ENCODE measurements at regions of chr19 and their contacts with region 1.

Region 1: DNA sequence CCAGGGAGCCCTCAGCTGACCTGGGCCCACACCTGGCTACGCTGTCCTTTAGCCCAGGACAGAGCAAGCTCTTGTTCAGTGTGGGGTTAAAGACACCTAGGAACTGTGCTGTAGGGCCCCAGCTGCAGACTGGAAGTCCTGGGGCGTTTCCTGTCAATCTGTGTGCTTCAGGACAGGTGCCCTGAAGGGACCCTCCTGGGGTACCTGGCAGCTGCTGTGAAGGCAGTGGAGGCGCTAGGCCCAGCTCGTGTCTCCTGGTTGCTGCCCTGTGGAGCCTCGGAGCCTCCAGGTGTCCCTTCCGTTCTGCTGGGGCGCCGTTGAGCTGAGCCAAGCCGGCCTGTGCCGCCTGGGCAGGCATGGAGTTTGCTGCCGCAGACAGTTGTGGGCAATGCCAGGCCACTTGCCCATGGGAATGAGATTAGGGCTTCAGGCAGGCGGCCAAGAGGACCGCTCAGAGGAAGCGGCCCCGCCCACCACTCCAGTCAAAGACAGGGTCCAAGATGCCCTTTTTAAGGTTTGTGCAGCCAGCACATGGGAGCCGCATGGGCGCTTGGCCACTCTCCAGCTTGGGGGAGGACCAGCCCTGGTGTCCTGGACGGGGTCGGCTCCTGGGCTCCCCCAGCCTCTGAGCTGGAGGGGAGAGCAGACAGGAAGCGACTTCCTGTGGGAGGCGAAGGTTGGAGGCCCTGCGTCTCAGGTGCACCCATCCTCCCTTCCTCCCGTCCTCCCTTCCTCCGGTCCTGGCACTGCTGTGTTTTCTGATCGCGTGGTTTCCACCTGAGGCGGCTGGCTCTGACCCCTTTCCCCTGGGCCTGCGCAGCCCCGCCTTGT is 4.0 kb downstream of the PTBP1 start:
- DNase-seq: no peak
- H3K27ac ChIP-seq: peak overlapping the region; percentile 99
- CTCF ChIP-seq: no peak

Region 2: DNA sequence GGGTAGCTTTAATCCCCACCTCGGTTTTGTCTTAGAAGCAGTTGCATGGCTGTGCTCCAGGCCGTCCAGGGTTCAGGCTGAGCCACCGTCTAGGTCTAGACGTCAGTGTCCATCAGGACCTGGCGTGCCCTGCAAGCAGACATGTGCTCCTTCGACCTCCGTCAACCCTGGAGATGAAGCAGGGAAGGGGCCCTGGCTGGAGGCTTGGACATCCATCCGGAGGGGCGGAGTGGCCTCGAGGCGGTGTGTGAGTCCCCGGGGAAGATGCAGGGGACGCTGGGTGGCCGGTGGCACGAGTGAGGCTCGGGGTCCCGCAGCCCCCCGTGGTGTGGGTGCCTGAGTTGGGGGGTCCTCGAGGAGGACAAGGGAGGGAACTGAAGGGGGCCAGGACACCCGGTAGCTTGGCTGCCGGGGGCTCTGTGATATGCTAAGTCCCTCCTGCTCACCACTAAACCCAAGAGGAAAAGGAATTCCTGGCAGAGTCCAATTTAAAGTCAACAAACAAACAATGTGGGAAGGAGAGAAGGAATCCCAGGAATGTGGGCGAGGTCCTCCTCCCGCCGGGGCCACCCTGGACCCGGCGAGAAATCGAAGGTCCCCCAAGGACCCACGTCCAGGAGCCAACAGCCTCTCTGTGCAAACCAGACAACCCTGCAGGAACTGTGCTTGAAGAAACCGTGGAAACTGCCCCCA is 18.9 kb before region 1 on chr19:
- CTCF ChIA-PET with region 1: interaction called, 4 read pairs
- POLR2A ChIA-PET with region 1: interaction called, 11 read pairs
- DNase-seq: peak; percentile 70
- H3K27ac ChIP-seq: peak overlapping the region; percentile 99
- CTCF ChIP-seq: no peak

Region 3: GRCh38 chr19:1020868-1021425 is 219.7 kb after region 1 on chr19 and contains the start of gene TMEM259:
- CTCF ChIA-PET with region 1: no interaction called
- POLR2A ChIA-PET with region 1: interaction called, 10 read pairs
- DNase-seq: peak; percentile 96
- H3K27ac ChIP-seq: peak within 1 kb of the TSS; percentile 93
- CTCF ChIP-seq: no peak

Region 4: GRCh38 chr19:1074544-1075283 is 273.5 kb after region 1 on chr19:
- CTCF ChIA-PET with region 1: no interaction called
- POLR2A ChIA-PET with region 1: no interaction called
- DNase-seq: peak; percentile 82
- H3K27ac ChIP-seq: peak overlapping the region; percentile 72
- CTCF ChIP-seq: no peak

Measured in RWPE1 (cell line).